GM10248 (cell line): ENCODE measurements at regions of chr4 and their contacts with region 1.

Region 1: GRCh38 chr4:182604161-182604622 is 313.0 kb downstream of the DCTD start:
- DNase-seq: no peak
- CTCF ChIP-seq: no peak

Region 2: GRCh38 chr4:182616476-182616875 is 12.3 kb after region 1 on chr4:
- CTCF ChIA-PET with region 1: interaction called, 14 read pairs
- POLR2A ChIA-PET with region 1: no interaction called
- DNase-seq: no peak
- CTCF ChIP-seq: no peak